Activated CD4-positive, alpha-beta T cell treated with anti-CD3 and anti-CD28 coated beads, Interleukin-2, amount 10 ng/mL, durations not matched to agents 24 days and 14 days (primary cell): ENCODE measurements at regions of chr7 and their contacts with region 1.

Region 1: GRCh38 chr7:132518102-132518838 is 58.0 kb downstream of the PLXNA4 start:
- DNase-seq: peak; percentile 72
- H3K4me3 Mint-ChIP-seq: no peak overlapping the region
- H3K27ac Mint-ChIP-seq: no peak overlapping the region
- H3K4me1 Mint-ChIP-seq: peaks cover 15% of the 10 kb centered on the region
- H3K27me3 Mint-ChIP-seq: peaks cover 2% of the 10 kb centered on the region

Region 2: DNA sequence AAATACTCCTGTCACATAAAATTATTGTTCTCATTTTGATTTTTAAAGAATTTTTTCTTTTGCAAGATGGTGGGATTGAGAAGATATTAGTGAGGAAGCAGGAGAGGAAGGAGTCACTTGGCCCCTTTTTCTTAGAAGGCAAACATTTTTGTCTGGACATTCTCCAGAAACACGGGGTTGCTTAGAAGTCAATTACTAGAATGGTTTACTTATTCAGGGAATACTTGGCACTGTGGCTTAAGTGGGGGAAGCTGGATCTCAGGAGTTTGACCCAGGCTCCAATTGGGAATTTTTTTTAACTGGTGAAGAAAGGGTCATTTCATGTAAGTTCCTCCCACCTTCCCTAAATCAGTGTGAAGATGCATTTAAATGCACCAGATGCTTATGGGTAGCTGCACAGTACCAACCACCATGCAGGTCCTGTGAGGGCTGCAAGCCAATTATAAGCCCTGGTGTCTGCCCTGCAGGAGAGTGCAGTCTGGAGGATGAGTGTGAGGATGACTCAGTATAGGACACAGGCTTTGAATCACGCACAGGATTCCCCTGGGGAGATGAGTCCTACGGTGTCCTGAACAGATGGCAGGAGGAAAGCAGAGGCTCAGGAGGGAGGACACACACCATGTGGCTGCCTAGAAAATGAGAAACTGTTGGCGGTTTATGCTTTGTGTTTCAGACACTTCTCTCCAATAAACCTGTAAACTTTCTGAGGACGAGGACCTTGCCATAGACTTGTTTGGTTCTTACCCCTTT is 241.1 kb before region 1 on chr7:
- intact Hi-C with region 1: no loop called
- DNase-seq: no peak
- H3K4me3 Mint-ChIP-seq: no peak overlapping the region
- H3K27ac Mint-ChIP-seq: no peak overlapping the region
- H3K4me1 Mint-ChIP-seq: no peaks in the 10 kb centered on the region
- H3K27me3 Mint-ChIP-seq: peaks cover 5% of the 10 kb centered on the region

Region 3: GRCh38 chr7:132557489-132558044 is 39.3 kb after region 1 on chr7:
- intact Hi-C with region 1: loop called (anchors 2 kb)
- DNase-seq: no peak
- H3K4me3 Mint-ChIP-seq: no peak overlapping the region
- H3K27ac Mint-ChIP-seq: peak overlapping the region; percentile 16
- H3K4me1 Mint-ChIP-seq: peaks cover 17% of the 10 kb centered on the region
- H3K27me3 Mint-ChIP-seq: peaks cover 35% of the 10 kb centered on the region